Esophagus muscularis mucosa (tissue), 4 donors: ENCODE measurements at regions of chr5 and their contacts with region 1.

Region 1: GRCh38 chr5:157476702-157477408 is 16.8 kb downstream of the NIPAL4 start:
- DNase-seq: no peak
- H3K4me3 ChIP-seq: no peak overlapping the region
- H3K27ac ChIP-seq: peak overlapping the region; percentile 60 to 84 (median 77)
- H3K4me1 ChIP-seq: peaks cover 10 to 64% (median 55%) of the 10 kb centered on the region in 4 donors
- H3K27me3 ChIP-seq: peaks cover 0 to 3% (median 0%) of the 10 kb centered on the region in 4 donors
- CTCF ChIP-seq: peak; percentile 73 to 82 (median 79)
- EP300 ChIP-seq: no peak
- POLR2A ChIP-seq: no peak

Region 2: DNA sequence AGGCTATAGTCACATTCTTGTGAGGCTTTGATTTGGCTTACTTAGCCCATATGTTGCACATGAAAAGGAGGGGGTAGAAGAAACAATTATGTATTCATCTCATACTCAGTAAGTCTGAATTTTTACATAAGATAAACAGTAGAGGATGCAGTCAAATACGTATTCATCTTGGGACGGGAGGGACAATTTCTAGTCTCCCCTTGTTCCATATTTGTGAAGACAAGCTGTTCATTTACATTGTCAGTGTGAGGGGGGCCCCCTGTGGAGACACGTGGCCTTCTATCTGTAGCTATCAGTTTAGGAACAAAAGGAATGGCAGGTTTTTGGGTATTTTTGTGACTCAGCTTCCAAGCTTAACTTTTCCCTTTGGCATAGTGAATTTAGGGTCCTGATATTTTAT is 675.9 kb before region 1 on chr5:
- intact Hi-C with region 1: no loop called
- DNase-seq: no peak
- H3K4me3 ChIP-seq: no peak overlapping the region
- H3K27ac ChIP-seq: no peak overlapping the region
- H3K4me1 ChIP-seq: no peaks in the 10 kb centered on the region
- H3K27me3 ChIP-seq: no peaks in the 10 kb centered on the region
- CTCF ChIP-seq: no peak
- EP300 ChIP-seq: no peak
- POLR2A ChIP-seq: no peak

Region 3: DNA sequence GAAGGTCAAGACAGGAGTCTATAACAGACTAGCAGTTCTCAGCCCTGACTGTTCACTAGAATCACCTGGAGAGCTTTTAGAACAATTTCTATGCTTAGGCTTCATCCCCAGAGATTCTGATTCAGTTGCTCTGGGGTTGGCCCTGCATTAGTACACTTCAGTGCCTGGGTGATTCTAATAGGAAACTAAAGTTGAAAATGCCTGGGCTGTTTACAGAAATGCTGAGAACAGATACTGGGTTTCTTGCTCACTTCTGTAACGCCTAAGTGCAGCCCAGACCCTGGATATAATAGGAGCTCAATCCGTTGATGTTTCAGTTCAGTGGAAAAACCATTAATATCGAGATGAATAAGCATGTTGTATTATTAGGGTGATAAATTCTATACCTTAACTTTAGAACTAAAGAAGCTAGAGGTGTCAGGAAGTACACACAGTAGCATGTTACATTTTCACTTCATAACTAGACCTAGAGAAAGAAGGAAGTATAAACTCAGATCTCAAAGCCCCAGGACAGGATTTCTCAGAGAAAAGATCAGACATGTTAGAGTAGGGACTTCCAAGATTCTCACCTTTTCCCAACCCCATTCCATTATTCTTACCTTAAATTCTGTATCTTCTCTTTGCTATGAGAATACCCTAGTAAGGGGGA is 388.4 kb before region 1 on chr5:
- intact Hi-C with region 1: no loop called
- DNase-seq: no peak
- H3K4me3 ChIP-seq: no peak overlapping the region
- H3K27ac ChIP-seq: no peak overlapping the region
- H3K4me1 ChIP-seq: no peaks in the 10 kb centered on the region
- H3K27me3 ChIP-seq: no peaks in the 10 kb centered on the region
- CTCF ChIP-seq: no peak
- EP300 ChIP-seq: no peak
- POLR2A ChIP-seq: no peak

Region 4: GRCh38 chr5:157366741-157367674 is 109.8 kb before region 1 on chr5:
- intact Hi-C with region 1: loop called (anchors 1 kb)
- DNase-seq: no peak
- H3K4me3 ChIP-seq: no peak overlapping the region
- H3K27ac ChIP-seq: peak overlapping the region; percentile 57 to 85 (median 78)
- H3K4me1 ChIP-seq: peaks cover 1 to 55% (median 43%) of the 10 kb centered on the region in 4 donors
- H3K27me3 ChIP-seq: no peaks in the 10 kb centered on the region
- CTCF ChIP-seq: peak; percentile 66 to 75 (median 73)
- EP300 ChIP-seq: no peak
- POLR2A ChIP-seq: no peak

Region 5: GRCh38 chr5:157582731-157583620 is 106.1 kb after region 1 on chr5:
- intact Hi-C with region 1: no loop called
- DNase-seq: no peak
- H3K4me3 ChIP-seq: no peak overlapping the region
- H3K27ac ChIP-seq: no peak overlapping the region
- H3K4me1 ChIP-seq: no peaks in the 10 kb centered on the region
- H3K27me3 ChIP-seq: no peaks in the 10 kb centered on the region
- CTCF ChIP-seq: no peak
- EP300 ChIP-seq: no peak
- POLR2A ChIP-seq: no peak